Esophagus squamous epithelium (tissue), 5 donors: ENCODE measurements at regions of chr19 and their contacts with region 1.

Region 1: DNA sequence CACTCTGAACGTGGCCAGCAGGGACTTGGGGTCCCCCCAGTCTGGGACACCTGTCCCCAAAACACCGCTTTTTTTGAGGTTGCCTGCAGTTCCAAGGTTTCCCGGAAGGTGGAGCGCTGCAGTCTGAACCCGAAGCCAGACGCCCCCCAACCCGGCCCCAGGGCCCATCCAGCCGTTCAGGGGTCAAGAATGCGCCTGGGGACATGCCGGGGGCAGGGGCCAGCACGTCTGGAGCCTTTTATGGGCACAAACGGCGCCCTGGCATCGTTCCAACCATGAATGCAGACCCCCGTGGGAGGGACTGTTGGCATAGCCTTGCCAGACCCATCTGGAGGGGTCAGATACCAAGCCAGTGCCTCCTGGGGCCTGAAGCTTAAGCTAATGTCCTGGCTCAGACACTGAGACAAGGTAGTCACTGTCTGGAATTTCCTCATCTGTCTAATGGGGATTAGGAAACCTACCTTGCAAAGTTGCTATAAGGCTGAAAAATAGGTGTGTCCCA is 6.9 kb downstream of the S1PR5 start:
- DNase-seq: no peak
- H3K4me3 ChIP-seq: no peak overlapping the region
- H3K27ac ChIP-seq: peak overlapping the region; percentile 56 to 76 (median 68)
- H3K4me1 ChIP-seq: peaks cover 17 to 72% (median 18%) of the 10 kb centered on the region in 3 donors
- H3K27me3 ChIP-seq: peaks cover 0 to 68% (median 2%) of the 10 kb centered on the region in 4 donors
- CTCF ChIP-seq: peak in 5 of 6 experiments; percentile 29 to 59 (median 54)
- POLR2A ChIP-seq: no peak

Region 2: DNA sequence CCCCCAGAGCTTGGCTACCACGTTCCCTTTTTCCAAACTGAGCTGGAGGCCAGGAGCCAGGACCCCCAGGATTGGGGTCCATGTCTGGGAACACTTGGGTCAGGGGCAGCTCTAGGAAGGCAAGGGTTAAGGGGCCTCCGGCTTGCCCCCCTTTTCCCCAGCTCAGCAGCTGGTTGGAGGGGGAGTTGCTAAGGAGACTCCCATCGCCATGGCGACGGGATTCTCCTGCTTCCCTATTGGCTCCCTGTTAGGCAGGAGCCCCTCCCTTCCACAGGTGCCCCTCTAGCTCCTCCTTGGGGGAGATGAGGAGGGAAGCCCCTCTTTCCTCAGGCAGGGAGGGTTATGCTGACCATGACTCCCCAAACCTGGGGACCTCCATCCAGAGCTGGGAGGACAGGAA is 56.1 kb before region 1 on chr19:
- intact Hi-C with region 1: no loop called
- DNase-seq: no peak
- H3K4me3 ChIP-seq: no peak overlapping the region
- H3K27ac ChIP-seq: no peak overlapping the region
- H3K4me1 ChIP-seq: no peaks in the 10 kb centered on the region
- H3K27me3 ChIP-seq: peaks cover 0 to 14% (median 0%) of the 10 kb centered on the region in 4 donors
- CTCF ChIP-seq: no peak
- POLR2A ChIP-seq: no peak

Region 3: DNA sequence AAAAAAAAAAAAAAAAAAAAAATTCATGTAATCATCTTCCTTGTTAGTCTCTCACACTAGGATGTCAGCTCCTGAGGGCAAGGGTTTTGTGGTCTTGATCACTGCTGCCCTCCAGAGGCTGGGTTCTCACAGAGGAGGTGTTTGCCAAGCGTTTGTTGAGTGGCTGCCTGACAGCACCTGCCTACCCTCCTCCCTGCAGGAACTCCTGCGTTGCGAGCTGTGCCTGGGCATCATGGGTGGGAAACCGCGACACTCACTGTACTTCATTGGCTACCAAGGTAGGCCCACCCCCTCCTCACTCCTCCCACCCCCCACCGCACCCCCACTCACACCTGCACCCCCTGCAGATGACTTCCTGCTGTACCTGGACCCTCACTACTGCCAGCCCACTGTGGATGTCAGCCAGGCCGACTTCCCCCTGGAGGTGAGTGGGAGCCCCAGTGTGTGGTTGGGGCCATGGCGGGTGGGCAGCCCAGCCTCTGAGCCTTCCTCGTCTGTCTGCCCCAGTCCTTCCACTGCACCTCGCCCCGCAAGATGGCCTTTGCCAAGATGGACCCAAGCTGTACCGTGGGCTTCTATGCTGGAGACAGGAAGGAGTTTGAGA is 41.4 kb after region 1 on chr19:
- intact Hi-C with region 1: loop called (anchors 5 kb)
- DNase-seq: no peak
- H3K4me3 ChIP-seq: no peak overlapping the region
- H3K27ac ChIP-seq: peak overlapping the region in 1 of 4 donors; percentile 29
- H3K4me1 ChIP-seq: peaks cover 32 to 70% (median 34%) of the 10 kb centered on the region in 3 donors
- H3K27me3 ChIP-seq: no peaks in the 10 kb centered on the region
- CTCF ChIP-seq: peak in 4 of 6 experiments; percentile 9 to 50 (median 23)
- POLR2A ChIP-seq: no peak

Region 4: GRCh38 chr19:10612491-10613119 is 102.3 kb after region 1 on chr19:
- intact Hi-C with region 1: no loop called
- DNase-seq: no peak
- H3K4me3 ChIP-seq: no peak overlapping the region
- H3K27ac ChIP-seq: peak overlapping the region; percentile 4 to 59 (median 47)
- H3K4me1 ChIP-seq: peaks cover 6 to 60% (median 21%) of the 10 kb centered on the region in 3 donors
- H3K27me3 ChIP-seq: no peaks in the 10 kb centered on the region
- CTCF ChIP-seq: no peak
- POLR2A ChIP-seq: no peak

Region 5: DNA sequence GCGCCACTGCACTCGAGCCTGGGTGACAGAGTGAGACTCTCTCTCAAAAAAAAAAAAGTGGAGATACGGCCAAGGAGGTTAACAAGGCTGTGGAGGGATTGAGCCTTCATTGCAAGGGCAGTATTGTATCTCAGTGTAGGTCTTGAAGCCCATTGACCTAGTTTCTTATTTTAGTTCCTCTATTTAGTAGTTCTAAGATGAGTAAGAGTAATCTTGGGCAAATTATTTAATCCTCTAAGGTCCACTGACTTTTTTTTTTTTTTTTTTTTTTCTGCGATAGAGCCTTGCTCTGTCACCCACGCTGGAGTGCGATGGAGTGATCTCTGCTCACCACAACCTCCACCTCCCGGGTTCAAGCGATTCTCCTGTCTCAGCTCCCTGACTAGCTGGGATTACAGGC is 129.5 kb after region 1 on chr19:
- intact Hi-C with region 1: no loop called
- DNase-seq: no peak
- H3K4me3 ChIP-seq: no peak overlapping the region
- H3K27ac ChIP-seq: no peak overlapping the region
- H3K4me1 ChIP-seq: peaks cover 6 to 31% (median 11%) of the 10 kb centered on the region in 3 donors
- H3K27me3 ChIP-seq: no peaks in the 10 kb centered on the region
- CTCF ChIP-seq: no peak
- POLR2A ChIP-seq: no peak

Region 6: GRCh38 chr19:10662384-10663251 is 152.3 kb after region 1 on chr19:
- intact Hi-C with region 1: no loop called
- DNase-seq: no peak
- H3K4me3 ChIP-seq: no peak overlapping the region
- H3K27ac ChIP-seq: peak overlapping the region in 1 of 4 donors; percentile 11
- H3K4me1 ChIP-seq: peaks cover 31 to 92% (median 40%) of the 10 kb centered on the region in 3 donors
- H3K27me3 ChIP-seq: no peaks in the 10 kb centered on the region
- CTCF ChIP-seq: no peak
- POLR2A ChIP-seq: no peak